Activated CD8-positive, alpha-beta memory T cell treated with anti-CD3 and anti-CD28 coated beads, Interleukin-2, amount 10 ng/mL, durations not matched to agents 7 days and 5 days (primary cell): ENCODE measurements at regions of chr1 and their contacts with region 1.

Region 1: DNA sequence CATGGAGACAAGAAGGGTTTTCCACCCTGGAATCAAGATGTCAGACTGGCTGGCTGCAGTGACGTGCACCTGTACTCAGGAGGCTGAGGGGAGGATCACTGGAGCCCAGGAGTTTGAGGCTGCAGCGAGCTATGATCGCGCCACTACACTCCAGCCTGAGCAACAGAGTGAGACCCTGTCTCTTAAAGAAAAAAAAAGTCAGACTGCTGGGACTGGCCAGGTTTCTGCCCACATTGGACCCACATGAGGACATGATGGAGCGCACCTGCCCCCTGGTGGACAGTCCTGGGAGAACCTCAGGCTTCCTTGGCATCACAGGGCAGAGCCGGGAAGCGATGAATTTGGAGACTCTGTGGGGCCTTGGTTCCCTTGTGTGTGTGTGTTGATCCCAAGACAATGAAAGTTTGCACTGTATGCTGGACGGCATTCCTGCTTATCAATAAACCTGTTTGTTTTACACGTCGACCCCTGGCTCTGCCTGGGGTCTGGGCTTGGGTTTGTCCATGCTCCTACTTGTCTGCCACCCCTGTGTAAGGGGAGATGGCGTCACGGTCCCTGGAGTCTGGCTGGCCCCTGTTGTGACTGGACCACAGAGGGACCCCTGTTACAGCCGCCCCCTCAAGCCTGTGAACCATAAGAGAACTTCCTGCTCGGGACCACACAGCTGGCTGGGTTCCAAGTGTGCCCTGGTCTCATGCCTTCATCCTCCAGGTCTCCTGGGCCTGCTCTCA is 20.9 kb upstream of the VPS13D start:
- DNase-seq: peak; percentile 88
- ATAC-seq: peak; percentile 79
- H3K4me3 Mint-ChIP-seq: no peak overlapping the region
- H3K27ac Mint-ChIP-seq: peak overlapping the region; percentile 61
- H3K4me1 Mint-ChIP-seq: peaks cover 46% of the 10 kb centered on the region
- H3K27me3 Mint-ChIP-seq: no peaks in the 10 kb centered on the region

Region 2: DNA sequence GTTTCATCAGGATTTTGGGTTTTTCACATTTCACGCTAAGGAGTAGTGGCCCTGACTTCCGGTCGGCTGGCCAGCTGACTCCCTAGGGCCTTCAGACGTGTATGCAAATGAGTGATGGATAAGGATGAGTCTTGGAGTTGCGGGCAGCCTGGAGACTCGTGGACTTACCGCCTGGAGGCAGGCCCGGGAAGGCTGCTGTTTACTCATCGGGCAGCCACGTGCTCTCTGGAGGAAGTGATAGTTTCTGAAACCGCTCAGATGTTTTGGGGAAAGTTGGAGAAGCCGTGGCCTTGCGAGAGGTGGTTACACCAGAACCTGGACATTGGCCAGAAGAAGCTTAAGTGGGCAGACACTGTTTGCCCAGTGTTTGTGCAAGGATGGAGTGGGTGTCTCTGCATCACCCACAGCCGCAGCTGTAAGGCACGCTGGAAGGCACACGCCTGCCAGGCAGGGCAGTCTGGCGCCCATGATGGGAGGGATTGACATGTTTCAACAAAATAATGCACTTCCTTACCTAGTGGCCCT is 65.2 kb before region 1 on chr1:
- CTCF ChIA-PET with region 1: interaction called, 13 read pairs
- DNase-seq: no peak
- ATAC-seq: no peak
- H3K4me3 Mint-ChIP-seq: no peak overlapping the region
- H3K27ac Mint-ChIP-seq: peak overlapping the region; percentile 70
- H3K4me1 Mint-ChIP-seq: peaks cover 48% of the 10 kb centered on the region
- H3K27me3 Mint-ChIP-seq: no peaks in the 10 kb centered on the region